Activated CD8-positive, alpha-beta T cell treated with anti-CD3 and anti-CD28 coated beads for 36 hours (primary cell): ENCODE measurements at regions of chr6 and their contacts with region 1.

Region 1: DNA sequence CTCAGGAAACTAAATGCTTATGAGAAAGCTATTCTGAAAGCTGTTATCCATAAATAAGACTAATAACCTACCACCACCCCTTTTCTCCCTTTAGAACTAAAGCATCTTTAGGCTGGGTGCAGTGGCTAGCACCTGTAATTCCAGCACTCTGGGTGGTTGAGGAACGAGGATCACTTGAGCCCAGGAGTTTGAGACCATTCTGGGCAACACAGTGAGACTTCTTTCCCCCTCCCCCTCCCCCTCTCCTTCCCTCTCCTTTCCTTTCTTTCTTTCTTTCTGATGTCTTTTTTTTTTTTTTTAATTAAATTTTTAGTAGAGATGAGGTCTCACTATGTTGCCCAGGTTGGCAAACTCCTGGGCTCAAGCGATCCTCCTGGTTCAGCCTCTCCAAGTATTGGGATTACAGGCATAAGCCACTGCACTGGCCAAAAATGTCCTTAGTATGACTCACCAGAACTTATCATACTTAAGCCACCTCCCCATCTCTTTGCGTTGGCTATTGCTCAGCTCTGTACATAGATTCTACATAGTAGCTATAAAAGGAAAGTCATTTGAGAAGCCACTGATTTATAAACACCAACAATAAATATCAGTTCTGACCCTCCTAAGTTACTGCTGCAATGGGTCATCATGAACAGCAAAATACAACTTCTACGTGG is 54.8 kb upstream of the SPDEF start:
- DNase-seq: no peak
- ATAC-seq: no peak
- H3K4me3 Mint-ChIP-seq: no peak overlapping the region
- H3K27ac Mint-ChIP-seq: no peak overlapping the region
- H3K4me1 Mint-ChIP-seq: peaks cover 13% of the 10 kb centered on the region
- H3K27me3 Mint-ChIP-seq: no peaks in the 10 kb centered on the region
- CTCF ChIP-seq: no peak

Region 2: DNA sequence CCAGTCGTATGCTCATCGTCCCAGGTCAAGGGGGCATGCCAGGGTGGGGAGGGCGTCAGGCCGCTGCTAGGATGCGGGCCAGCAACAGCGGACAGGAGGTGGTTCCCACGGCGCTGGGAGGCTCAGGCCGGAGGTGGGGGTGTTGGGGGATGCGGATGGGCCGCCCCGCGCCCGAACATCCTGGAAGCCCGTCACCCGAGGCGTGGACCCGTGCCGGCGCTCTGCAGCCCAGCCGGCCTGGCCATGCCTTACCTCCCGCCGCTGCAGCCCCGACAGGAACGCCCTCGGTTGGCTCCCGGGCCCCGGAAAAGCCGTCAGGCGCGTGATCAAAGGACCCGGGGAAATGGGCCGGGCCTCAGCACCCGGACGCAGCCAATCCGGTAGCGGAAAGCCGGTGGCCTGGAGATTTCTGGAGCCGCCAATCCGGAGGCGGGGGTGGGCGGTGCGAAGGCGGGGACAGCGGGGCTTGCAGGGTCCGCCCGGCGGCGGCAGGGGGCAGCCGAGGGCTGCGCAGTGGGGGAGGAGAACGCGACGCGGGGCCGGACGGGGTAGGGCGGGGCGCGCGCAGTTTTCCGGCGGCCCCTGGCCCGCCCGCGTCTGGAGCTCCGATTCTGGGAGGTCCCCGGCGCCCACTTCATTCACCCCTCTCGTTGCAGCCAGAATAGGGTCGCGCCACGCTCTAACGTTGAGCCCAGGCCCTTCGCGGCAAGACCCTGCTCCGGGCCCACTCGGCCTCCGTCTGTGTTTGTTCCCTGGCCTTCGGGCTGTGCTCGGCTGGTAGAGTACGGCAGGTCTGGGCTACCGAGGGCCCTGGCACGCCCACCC is 362.0 kb before region 1 on chr6 and contains the start of gene SMIM29:
- CTCF ChIA-PET with region 1: interaction called, 15 read pairs
- POLR2A ChIA-PET with region 1: no interaction called
- intact Hi-C with region 1: loop called (anchors 5 kb)
- DNase-seq: peak; percentile 97
- ATAC-seq: peak; percentile 88
- H3K4me3 Mint-ChIP-seq: peak within 1 kb of the TSS; percentile 85
- H3K27ac Mint-ChIP-seq: peak within 1 kb of the TSS; percentile 89
- H3K4me1 Mint-ChIP-seq: peaks cover 37% of the 10 kb centered on the region
- H3K27me3 Mint-ChIP-seq: no peaks in the 10 kb centered on the region
- CTCF ChIP-seq: peak; percentile 88
- total RNA-seq, gene SMIM29: 13.3 to 16.4 TPM

Region 3: DNA sequence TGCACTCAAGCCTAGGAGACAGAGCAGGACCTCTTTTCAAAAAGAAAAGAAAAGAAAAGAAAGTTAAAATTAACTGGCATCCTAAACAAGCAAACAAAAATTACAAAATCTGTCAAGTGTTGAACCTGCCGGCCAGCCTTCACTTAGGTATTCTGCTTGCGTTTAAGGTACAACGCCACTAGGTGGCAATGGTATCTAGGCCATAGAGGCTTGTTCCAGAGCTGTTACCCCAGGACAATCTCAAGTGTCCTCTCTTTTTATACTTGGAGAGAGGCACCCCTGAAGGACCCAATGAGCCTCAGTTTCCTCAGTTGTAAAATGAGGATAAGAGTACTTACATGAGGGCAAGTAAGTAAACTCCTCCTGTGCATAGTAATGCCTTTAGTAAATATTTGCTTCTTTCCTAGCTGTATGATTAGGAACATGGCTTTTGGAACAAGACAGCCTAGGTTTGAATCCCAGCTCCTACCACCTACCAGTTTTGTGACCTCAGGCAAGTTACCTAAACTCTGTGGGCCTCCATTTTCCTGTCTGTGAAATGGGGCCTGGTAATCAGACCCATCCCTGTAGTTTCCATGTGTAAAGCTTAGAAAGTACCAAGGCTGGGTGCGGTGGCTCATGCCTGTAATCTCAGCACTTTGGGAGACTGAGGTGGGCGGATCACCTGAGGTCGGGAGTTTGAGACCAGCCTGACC is 150.9 kb before region 1 on chr6:
- CTCF ChIA-PET with region 1: interaction called, 119 read pairs
- POLR2A ChIA-PET with region 1: no interaction called
- intact Hi-C with region 1: loop called (anchors 2 kb)
- DNase-seq: peak; percentile 69
- ATAC-seq: peak; percentile 90
- H3K4me3 Mint-ChIP-seq: no peak overlapping the region
- H3K27ac Mint-ChIP-seq: no peak overlapping the region
- H3K4me1 Mint-ChIP-seq: no peaks in the 10 kb centered on the region
- H3K27me3 Mint-ChIP-seq: peaks cover 4% of the 10 kb centered on the region
- CTCF ChIP-seq: peak; percentile 85

Region 4: DNA sequence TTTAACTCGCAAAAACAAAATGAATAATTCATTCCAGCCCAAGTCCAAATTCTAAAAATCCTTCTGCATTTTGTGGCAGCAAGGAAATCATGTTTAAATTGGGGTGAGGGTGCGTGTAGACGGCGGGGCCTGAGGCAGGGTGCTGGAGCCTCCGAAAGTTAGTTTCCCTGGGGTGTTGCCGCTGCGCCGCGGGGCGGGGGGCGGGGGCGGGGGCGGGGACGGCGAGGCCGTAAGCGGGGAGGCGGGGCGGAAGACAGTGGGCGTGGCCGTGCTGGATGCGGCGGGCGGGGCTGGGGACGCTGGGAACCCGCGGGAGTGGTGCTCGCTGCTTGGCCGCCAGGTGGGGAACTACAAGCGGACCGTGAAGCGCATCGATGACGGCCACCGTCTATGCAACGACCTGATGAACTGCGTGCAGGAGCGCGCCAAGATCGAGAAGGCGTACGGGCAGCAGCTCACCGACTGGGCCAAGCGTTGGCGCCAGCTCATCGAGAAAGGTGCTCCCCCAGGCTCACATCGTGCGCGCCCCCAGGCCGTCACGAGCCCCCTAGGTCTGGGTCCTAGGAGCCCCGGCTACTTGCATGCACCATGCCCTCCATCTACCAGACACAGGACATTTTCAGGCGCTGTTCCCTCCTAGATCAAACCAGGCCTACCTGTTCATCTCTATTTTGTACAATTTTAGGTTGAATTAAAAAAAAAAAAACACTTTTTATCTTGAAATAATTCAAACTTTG is 83.8 kb before region 1 on chr6:
- CTCF ChIA-PET with region 1: interaction called, 25 read pairs
- POLR2A ChIA-PET with region 1: no interaction called
- intact Hi-C with region 1: loop called (anchors 5 kb)
- DNase-seq: peak; percentile 98
- ATAC-seq: peak; percentile 100
- H3K4me3 Mint-ChIP-seq: peak overlapping the region; percentile 44
- H3K27ac Mint-ChIP-seq: no peak overlapping the region
- H3K4me1 Mint-ChIP-seq: peaks cover 5% of the 10 kb centered on the region
- H3K27me3 Mint-ChIP-seq: no peaks in the 10 kb centered on the region
- CTCF ChIP-seq: peak; percentile 67

Region 5: DNA sequence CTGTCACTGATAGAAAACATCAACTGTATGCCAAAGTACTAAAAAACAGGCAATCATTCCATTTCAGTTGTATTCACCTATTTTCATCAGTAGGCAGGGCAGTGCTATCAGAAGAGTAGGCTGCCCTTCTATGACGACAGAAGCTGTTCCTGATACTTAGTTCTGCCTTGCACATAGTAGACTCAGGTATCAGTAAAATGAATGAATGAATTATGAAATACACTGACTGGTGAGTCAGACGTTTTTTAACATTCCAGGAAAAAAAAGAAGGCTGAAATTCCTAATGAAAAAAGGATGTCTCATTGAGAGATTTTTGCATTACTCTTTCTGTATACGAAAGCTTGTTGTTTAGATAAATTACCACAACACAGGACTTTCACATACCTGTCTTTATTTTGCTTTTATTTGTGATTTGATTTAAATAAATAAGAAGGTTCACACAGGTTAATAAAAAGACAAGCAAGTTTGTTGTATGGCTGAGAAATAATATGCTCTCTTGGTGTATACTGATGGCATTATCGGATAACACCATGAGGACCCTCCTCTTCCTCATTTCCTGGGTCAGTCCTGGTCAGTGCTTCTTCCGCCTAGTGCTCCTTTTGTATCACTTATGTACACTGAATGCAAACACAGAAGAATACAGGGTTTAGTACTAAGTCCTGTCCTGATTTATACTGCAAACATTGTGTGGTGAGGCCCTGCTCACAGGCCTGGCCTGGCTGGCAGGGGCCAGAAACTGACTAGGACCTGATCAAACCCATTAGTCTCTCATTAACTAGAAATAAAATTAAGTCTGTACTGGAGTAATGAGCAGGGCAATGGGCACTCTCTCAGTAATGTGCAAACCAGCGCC is 15.4 kb before region 1 on chr6:
- CTCF ChIA-PET with region 1: interaction called, 44 read pairs
- POLR2A ChIA-PET with region 1: interaction called, 4 read pairs
- intact Hi-C with region 1: no loop called
- DNase-seq: no peak
- ATAC-seq: no peak
- H3K4me3 Mint-ChIP-seq: no peak overlapping the region
- H3K27ac Mint-ChIP-seq: no peak overlapping the region
- H3K4me1 Mint-ChIP-seq: peaks cover 37% of the 10 kb centered on the region
- H3K27me3 Mint-ChIP-seq: no peaks in the 10 kb centered on the region
- CTCF ChIP-seq: no peak

Region 6: GRCh38 chr6:35011096-35012041 is 400.4 kb after region 1 on chr6:
- CTCF ChIA-PET with region 1: no interaction called
- POLR2A ChIA-PET with region 1: no interaction called
- intact Hi-C with region 1: no loop called
- DNase-seq: peak; percentile 48
- ATAC-seq: peak; percentile 90
- H3K4me3 Mint-ChIP-seq: no peak overlapping the region
- H3K27ac Mint-ChIP-seq: no peak overlapping the region
- H3K4me1 Mint-ChIP-seq: peaks cover 11% of the 10 kb centered on the region
- H3K27me3 Mint-ChIP-seq: no peaks in the 10 kb centered on the region
- CTCF ChIP-seq: no peak